WTC11 (cell line): ENCODE measurements at regions of chr1 and their contacts with region 1.

Region 1: GRCh38 chr1:39081266-39082009 is 55.3 kb downstream of the NDUFS5 start:
- DNase-seq: peak; percentile 64
- ATAC-seq: peak; percentile 56
- H3K4me3 Mint-ChIP-seq: no peak overlapping the region
- H3K27ac Mint-ChIP-seq: no peak overlapping the region
- H3K4me1 Mint-ChIP-seq: peaks cover 12% of the 10 kb centered on the region
- H3K27me3 Mint-ChIP-seq: peaks cover 34% of the 10 kb centered on the region
- CTCF ChIP-seq: no peak

Region 2: DNA sequence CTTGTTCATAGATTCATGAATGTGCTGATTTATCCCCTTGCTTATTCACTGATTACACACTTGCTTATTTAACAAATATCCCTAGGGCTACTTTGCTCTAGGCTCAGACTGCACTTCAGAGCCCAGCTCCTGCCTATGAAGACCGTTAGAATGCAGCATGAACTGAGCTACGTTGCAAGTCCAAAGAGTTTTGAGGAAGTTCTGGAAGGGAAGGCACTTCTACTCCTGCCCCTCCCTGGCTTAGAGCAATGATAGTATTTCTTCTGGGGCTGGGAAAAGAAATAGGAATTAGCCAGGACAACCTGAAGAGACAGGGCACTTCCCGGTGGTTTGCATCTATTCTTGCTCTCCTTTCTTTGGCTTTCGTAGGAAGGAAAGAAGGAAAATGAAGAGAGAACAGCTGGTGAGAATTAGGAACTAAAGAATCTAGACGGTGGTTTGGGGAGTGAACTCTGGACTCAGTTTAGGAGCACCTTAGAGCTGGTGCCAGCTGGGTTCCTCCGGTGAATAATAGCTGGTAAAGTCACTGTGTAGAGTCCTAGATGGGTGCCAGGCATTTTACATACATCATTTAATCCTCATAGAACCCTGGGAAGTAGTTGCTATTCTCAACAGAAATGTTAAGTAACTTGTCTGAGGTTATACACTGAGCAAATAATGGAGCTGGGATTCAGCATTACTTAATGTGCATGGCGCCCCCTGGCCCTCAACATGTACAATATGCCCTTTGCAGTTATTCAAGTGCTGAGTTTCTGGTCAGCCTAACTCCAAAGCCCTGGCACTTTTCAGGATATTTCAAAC is 10.6 kb after region 1 on chr1:
- CTCF ChIA-PET with region 1: interaction called, 38 read pairs
- POLR2A ChIA-PET with region 1: interaction called, 3 read pairs
- DNase-seq: peak; percentile 52
- ATAC-seq: peak; percentile 86
- H3K4me3 Mint-ChIP-seq: no peak overlapping the region
- H3K27ac Mint-ChIP-seq: no peak overlapping the region
- H3K4me1 Mint-ChIP-seq: no peaks in the 10 kb centered on the region
- H3K27me3 Mint-ChIP-seq: no peaks in the 10 kb centered on the region
- CTCF ChIP-seq: no peak

Region 3: DNA sequence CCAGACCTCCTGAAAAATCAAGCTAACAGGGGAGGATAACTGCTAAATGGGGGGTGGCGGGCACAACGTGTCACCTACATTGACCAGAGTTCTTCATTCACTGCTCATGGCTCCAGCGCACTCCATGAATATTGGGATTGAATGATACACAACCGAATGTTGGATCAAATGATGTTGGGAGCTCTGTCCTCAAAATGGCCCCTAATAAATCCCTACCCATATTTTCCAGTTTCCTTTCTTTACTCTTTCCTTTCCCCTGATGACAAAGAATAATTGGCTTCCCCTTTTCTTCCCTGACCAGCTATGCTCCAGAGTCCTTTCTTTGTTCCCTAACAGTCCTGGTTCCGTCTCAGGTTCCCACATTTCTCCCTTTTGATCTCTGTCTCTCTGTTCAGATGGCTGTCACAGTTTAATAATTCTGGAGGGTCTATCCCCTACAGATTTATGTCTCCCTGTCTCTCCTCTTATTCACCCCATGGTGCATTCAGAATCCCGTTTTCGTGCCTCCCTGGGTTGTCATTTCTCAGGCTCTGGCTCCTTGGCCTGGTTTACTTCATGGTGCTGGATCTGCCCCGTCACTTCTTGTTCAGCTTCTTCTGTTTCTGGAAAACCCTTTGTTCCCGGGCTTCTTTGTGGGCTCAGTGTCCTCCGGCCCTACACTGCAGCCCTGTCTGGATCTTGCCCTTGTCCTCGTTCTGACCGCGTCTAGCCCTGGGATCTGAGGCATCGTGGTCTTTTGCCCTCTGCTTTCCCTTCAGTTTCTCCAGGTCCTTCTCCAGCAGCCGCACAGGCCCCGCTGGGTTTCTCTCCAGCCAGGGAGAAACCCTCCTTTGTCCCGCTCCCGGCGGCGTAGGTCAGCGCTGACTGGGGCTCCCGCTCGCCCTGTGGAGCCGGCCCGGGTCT is 23.0 kb after region 1 on chr1:
- CTCF ChIA-PET with region 1: no interaction called
- POLR2A ChIA-PET with region 1: no interaction called
- DNase-seq: peak; percentile 55
- ATAC-seq: peak; percentile 9
- H3K4me3 Mint-ChIP-seq: peak overlapping the region; percentile 71
- H3K27ac Mint-ChIP-seq: peak overlapping the region; percentile 95
- H3K4me1 Mint-ChIP-seq: peaks cover 34% of the 10 kb centered on the region
- H3K27me3 Mint-ChIP-seq: no peaks in the 10 kb centered on the region
- CTCF ChIP-seq: no peak